CD8-positive, alpha-beta T cell (primary cell): ENCODE measurements at regions of chr19 and their contacts with region 1.

Region 1: DNA sequence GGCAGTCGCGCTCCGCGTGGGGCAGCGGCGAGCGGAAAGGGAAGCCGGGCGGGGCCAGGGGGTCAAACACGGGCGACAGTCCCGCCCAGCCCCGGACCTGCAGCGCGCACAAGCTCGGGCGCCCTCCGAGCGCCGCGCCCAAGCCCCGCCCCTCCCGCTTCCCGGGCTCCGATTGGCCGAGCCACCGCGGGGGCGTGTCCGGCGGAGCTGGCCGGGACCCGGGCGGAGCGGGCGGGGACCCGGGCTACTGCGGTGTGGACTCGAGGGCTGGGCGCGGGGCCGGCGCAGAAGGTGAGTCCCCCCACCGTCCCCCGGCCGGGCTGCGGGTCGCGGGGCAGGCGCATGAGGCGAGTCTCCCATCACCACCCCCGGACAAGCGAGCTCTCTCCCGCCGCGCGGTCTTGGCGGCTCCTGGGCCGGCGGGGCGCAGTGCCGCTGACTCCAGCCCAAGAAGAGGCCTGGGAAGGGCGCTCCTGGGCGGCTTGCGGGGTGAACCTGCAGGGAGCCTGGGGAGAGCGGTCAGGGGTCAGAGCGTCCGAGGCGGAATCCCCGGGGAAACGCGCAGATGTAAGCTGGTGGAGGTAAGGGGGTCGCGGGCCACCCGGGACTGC is at the start of gene PLEKHF1:
- DNase-seq: peak; percentile 56 to 89 (median 81)
- ATAC-seq: peak; percentile 69
- H3K4me3 ChIP-seq: peak within 1 kb of the TSS; percentile 91 to 96
- H3K4me3 Mint-ChIP-seq: peak within 1 kb of the TSS; percentile 89
- H3K27ac ChIP-seq: peak within 1 kb of the TSS; percentile 69 to 84
- H3K27ac Mint-ChIP-seq: peak within 1 kb of the TSS; percentile 94
- H3K4me1 ChIP-seq: peaks cover 57% of the 10 kb centered on the region
- H3K4me1 Mint-ChIP-seq: peaks cover 60% of the 10 kb centered on the region
- H3K27me3 ChIP-seq: no peaks in the 10 kb centered on the region
- H3K27me3 Mint-ChIP-seq: no peaks in the 10 kb centered on the region
- CTCF ChIP-seq: no peak
- total RNA-seq, gene PLEKHF1: 33.7 to 34.1 TPM

Region 2: GRCh38 chr19:29546583-29547190 is 118.6 kb before region 1 on chr19:
- CTCF ChIA-PET with region 1: no interaction called
- POLR2A ChIA-PET with region 1: no interaction called
- intact Hi-C with region 1: no loop called
- DNase-seq: no peak
- ATAC-seq: no peak
- H3K4me3 ChIP-seq: no peak overlapping the region
- H3K4me3 Mint-ChIP-seq: no peak overlapping the region
- H3K27ac ChIP-seq: no peak overlapping the region
- H3K27ac Mint-ChIP-seq: no peak overlapping the region
- H3K4me1 ChIP-seq: no peaks in the 10 kb centered on the region
- H3K4me1 Mint-ChIP-seq: no peaks in the 10 kb centered on the region
- H3K27me3 ChIP-seq: peaks cover 0 to 3% of the 10 kb centered on the region in 2 experiments
- H3K27me3 Mint-ChIP-seq: peaks cover 10% of the 10 kb centered on the region
- CTCF ChIP-seq: no peak

Region 3: GRCh38 chr19:29622138-29623070 is 42.9 kb before region 1 on chr19:
- CTCF ChIA-PET with region 1: interaction called, 19 read pairs
- POLR2A ChIA-PET with region 1: interaction called, 27 read pairs
- intact Hi-C with region 1: loop called in 1 of 2 experiments (anchors 2 kb)
- DNase-seq: peak in 6 of 9 experiments; percentile 26 to 73 (median 57)
- ATAC-seq: peak; percentile 65
- H3K4me3 ChIP-seq: peak overlapping the region; percentile 1 to 13
- H3K4me3 Mint-ChIP-seq: peak overlapping the region; percentile 68
- H3K27ac ChIP-seq: peak overlapping the region; percentile 2 to 66
- H3K27ac Mint-ChIP-seq: peak overlapping the region; percentile 75
- H3K4me1 ChIP-seq: peaks cover 47% of the 10 kb centered on the region
- H3K4me1 Mint-ChIP-seq: peaks cover 46% of the 10 kb centered on the region
- H3K27me3 ChIP-seq: no peaks in the 10 kb centered on the region
- H3K27me3 Mint-ChIP-seq: no peaks in the 10 kb centered on the region
- CTCF ChIP-seq: no peak

Region 4: GRCh38 chr19:29680447-29680846 is 15.1 kb after region 1 on chr19:
- CTCF ChIA-PET with region 1: interaction called, 35 read pairs
- POLR2A ChIA-PET with region 1: interaction called, 36 read pairs
- intact Hi-C with region 1: loop called in 1 of 2 experiments (anchors 2 kb)
- DNase-seq: peak; percentile 67 to 94 (median 85)
- ATAC-seq: peak; percentile 83
- H3K4me3 ChIP-seq: peak overlapping the region; percentile 13 to 44
- H3K4me3 Mint-ChIP-seq: peak overlapping the region; percentile 71
- H3K27ac ChIP-seq: peak overlapping the region; percentile 26 to 71
- H3K27ac Mint-ChIP-seq: peak overlapping the region; percentile 86
- H3K4me1 ChIP-seq: peaks cover 74% of the 10 kb centered on the region
- H3K4me1 Mint-ChIP-seq: peaks cover 76% of the 10 kb centered on the region
- H3K27me3 ChIP-seq: no peaks in the 10 kb centered on the region
- H3K27me3 Mint-ChIP-seq: no peaks in the 10 kb centered on the region
- CTCF ChIP-seq: no peak

Region 5: DNA sequence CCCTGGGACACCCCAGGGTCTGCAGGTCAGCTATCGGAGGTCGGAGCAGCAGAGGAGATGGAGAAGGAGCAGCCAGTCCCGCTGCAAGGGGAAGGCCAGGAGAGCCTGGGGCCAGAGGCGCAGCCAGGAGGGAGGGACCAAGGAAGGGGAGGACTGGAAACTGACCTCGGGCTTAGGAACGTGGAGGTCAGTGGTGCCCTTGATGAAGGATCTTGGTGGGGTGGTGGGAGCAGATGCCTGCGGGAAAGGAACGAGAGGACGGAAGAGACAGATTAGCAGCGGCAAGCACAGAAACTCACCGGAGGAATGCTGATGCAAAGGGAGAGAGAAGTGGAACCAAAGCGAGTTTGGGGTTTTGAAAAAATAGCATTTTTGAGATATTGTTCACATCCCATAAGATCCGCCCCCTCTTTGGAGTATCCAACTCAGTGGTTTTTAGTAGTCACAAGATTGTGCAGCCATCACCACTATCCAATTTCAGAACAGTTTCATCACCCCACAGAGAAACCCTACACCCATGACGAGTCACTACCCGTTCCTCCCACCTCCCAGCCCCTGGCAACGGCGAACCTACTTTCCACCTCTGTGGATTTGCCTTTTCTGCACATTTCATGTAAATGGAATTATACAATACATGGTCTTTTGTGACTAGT is 22.1 kb after region 1 on chr19:
- CTCF ChIA-PET with region 1: interaction called, 34 read pairs
- POLR2A ChIA-PET with region 1: interaction called, 15 read pairs
- intact Hi-C with region 1: loop called (anchors 1 to 2 kb)
- DNase-seq: no peak
- ATAC-seq: no peak
- H3K4me3 ChIP-seq: no peak overlapping the region
- H3K4me3 Mint-ChIP-seq: no peak overlapping the region
- H3K27ac ChIP-seq: no peak overlapping the region
- H3K27ac Mint-ChIP-seq: no peak overlapping the region
- H3K4me1 ChIP-seq: peaks cover 13% of the 10 kb centered on the region
- H3K4me1 Mint-ChIP-seq: peaks cover 26% of the 10 kb centered on the region
- H3K27me3 ChIP-seq: no peaks in the 10 kb centered on the region
- H3K27me3 Mint-ChIP-seq: no peaks in the 10 kb centered on the region
- CTCF ChIP-seq: no peak

Region 6: GRCh38 chr19:30529876-30530275 is 864.6 kb after region 1 on chr19:
- CTCF ChIA-PET with region 1: no interaction called
- POLR2A ChIA-PET with region 1: no interaction called
- intact Hi-C with region 1: no loop called
- DNase-seq: no peak
- ATAC-seq: no peak
- H3K4me3 ChIP-seq: no peak overlapping the region
- H3K4me3 Mint-ChIP-seq: no peak overlapping the region
- H3K27ac ChIP-seq: no peak overlapping the region
- H3K27ac Mint-ChIP-seq: no peak overlapping the region
- H3K4me1 ChIP-seq: no peaks in the 10 kb centered on the region
- H3K4me1 Mint-ChIP-seq: no peaks in the 10 kb centered on the region
- H3K27me3 ChIP-seq: no peaks in the 10 kb centered on the region
- H3K27me3 Mint-ChIP-seq: no peaks in the 10 kb centered on the region
- CTCF ChIP-seq: no peak